Dorsolateral prefrontal cortex (tissue), 120 donors: ENCODE measurements at regions of chr7 and their contacts with region 1.

Region 1: DNA sequence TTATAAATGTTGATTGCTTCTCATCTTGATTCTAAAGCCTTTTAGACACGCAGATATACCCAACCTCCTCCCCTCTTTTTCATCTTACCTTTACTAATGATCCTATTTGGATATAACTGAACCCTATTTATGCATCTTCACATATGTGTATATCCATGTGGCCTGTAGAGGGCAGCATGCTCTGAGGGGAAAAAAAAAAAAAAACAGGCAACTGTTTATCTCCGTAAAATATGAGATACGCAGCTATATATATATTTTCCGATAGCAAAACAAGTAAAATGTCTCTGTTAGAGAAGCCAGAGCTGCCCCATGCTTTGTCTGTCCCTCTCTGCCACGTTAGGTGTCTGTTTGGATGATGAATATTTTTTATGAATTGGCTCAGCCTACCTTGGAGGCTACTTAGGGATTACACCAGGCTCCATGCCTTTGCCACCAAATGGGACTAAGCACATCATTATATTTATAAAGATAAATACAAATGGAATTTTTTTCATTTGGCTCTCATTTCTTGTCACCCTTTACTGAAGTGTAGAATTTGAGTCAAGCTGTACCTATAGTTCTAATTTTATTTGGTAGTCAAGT is 174.8 kb upstream of the FZD1 start:
- DNase-seq: no peak
- H3K4me3 ChIP-seq: peak overlapping the region in 55 of 59 donors; percentile 5 to 60 (median 42)
- H3K27ac ChIP-seq: peak overlapping the region in 7 of 59 donors; percentile 9 to 63 (median 36)
- H3K27me3 ChIP-seq: no peaks in the 10 kb centered on the region
- CTCF ChIP-seq: peak; percentile 65 to 87 (median 79)

Region 2: DNA sequence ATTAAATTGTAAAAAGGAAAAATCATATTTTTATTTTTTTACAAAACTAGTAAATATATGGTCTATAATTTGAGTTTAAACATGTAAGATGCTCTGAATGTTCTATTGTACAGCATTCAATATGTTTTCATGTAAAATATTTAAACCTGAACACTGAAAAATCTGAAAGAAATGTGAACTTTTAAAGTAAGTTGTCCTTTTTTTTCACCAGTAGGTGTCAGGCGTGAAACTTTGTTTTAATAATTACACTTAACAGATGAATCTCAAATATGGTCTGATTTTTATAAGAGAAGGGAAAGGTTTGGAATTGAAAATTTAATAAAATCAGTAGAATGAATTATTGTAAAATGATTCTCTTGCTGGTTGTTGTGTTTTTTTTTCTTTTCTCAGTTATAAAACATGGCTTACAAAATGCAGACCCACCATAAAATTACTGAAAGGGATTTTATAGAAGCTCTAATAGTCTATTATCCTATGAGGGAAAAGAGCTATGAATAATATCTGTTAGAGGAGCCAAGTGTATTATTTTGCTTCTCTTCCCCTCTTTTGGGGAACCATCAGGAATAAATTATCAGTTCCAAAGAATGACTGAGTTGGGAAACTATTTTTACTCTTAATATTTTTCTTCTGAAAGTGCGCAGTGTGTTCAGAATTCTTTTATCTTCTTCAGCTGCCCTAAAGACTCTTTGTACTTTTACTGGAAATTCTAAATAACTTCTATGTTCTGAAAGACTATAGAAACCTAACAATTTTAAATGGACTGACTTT is 43.0 kb before region 1 on chr7:
- intact Hi-C with region 1: no loop called
- DNase-seq: no peak
- H3K4me3 ChIP-seq: no peak overlapping the region
- H3K27ac ChIP-seq: no peak overlapping the region
- H3K27me3 ChIP-seq: no peaks in the 10 kb centered on the region
- CTCF ChIP-seq: peak in 44 of 56 donors; percentile 10 to 52 (median 30)

Region 3: DNA sequence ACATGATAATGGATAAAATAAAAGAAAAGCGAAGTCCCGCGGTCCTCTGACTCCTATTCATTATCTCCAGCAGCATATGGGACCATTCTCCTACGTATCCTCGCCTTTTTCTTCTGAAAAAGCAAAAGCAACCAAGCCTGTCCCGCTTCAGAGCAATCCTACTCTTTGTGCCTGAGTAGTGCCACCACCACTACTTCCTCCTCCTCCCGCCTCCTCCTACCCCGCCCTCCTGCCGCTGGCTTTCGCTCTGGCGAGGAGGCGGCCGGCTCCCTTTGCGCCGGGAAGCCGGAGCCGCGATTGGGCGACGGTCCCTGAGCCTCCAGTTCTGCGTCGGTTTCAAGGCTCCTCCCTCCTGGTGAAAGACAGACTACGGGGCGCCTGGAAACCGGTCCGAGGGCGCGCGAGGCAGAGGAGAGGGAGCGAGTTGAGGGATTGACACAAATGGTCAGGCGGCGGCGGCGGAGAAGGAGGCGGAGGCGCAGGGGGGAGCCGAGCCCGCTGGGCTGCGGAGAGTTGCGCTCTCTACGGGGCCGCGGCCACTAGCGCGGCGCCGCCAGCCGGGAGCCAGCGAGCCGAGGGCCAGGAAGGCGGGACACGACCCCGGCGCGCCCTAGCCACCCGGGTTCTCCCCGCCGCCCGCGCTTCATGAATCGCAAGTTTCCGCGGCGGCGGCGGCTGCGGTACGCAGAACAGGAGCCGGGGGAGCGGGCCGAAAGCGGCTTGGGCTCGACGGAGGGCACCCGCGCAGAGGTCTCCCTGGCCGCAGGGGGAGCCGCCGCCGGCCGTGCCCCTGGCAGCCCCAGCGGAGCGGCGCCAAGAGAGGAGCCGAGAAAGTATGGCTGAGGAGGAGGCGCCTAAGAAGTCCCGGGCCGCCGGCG is 174.8 kb after region 1 on chr7 and contains the start of gene FZD1:
- intact Hi-C with region 1: loop called (anchors 5 to 10 kb)
- DNase-seq: peak; percentile 81 to 95 (median 93)
- H3K4me3 ChIP-seq: peak within 1 kb of the TSS; percentile 45 to 89 (median 80)
- H3K27ac ChIP-seq: peak within 1 kb of the TSS in 57 of 59 donors; percentile 39 to 94 (median 85)
- H3K27me3 ChIP-seq: peaks cover 0 to 4% (median 0%) of the 10 kb centered on the region in 45 donors
- CTCF ChIP-seq: peak in 19 of 56 donors; percentile 2 to 58 (median 22)
- total RNA-seq, gene FZD1: 2.1 to 12.3 (median 4.4) TPM

Region 4: DNA sequence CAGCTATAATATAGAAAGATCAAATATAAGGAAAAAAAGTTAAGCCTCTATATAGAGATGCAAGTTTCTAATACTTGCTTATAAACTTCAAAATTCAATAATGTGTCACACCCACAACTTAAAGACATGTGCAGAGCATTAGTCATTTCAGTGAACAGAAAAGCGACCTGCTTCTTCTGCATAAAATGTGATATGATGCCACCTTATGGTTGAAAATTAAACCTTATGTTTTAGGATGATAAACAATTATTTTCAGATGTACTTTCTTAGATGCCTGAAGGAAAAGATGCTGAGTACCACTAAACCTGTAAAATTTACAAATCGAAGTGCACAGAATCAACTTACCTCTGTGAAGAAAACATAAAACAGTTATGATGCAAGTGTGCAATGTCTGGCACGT is 695.0 kb after region 1 on chr7:
- intact Hi-C with region 1: loop called in 1 of 2 experiments (anchors 10 kb)
- DNase-seq: no peak
- H3K4me3 ChIP-seq: no peak overlapping the region
- H3K27ac ChIP-seq: no peak overlapping the region
- H3K27me3 ChIP-seq: no peaks in the 10 kb centered on the region
- CTCF ChIP-seq: peak in 55 of 56 donors; percentile 11 to 70 (median 44)